GM10248 (cell line): ENCODE measurements at regions of chr1 and their contacts with region 1.

Region 1: GRCh38 chr1:233381778-233382177 is 54.3 kb downstream of the MAP3K21 start:
- DNase-seq: no peak
- CTCF ChIP-seq: no peak

Region 2: DNA sequence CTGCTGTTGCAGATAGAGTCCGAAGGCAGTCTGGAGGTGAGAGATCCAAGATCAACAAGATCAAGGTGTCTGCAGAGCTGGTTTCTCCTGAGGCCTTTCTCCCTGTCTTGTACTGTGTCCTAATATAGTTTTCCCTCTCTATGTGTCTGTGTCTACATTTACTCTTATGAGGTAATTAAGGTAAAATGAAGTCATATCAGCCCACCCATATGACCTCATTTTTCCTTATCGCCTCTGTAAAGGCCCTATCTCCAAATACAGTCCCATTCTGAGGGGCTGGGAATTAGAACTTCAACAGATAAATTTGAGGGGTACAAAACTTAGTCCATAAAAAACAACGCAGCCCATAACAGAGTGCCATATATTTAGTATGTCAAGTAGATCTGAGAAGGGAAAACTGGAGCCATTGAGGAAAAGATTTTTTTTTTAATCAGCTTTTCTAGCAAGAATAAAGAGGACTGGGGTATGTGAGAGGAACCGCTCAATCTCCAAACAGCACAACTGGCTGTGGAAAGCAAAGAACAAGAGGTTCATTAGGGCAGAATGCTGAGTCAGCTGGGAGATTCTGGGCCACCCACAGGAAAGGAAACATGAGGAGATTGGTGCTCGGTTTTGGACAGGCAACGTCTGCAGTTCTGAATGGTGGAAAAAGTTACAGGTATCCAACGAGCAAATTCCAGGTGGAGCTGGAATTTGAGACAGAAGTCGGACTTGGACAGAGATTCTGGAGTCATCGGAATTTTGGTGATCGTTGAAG is 11.5 kb after region 1 on chr1:
- CTCF ChIA-PET with region 1: interaction called, 14 read pairs
- POLR2A ChIA-PET with region 1: interaction called, 5 read pairs
- DNase-seq: no peak
- CTCF ChIP-seq: no peak